Psoas muscle (tissue), 8 donors: ENCODE measurements at regions of chr15 and their contacts with region 1.

Region 1: DNA sequence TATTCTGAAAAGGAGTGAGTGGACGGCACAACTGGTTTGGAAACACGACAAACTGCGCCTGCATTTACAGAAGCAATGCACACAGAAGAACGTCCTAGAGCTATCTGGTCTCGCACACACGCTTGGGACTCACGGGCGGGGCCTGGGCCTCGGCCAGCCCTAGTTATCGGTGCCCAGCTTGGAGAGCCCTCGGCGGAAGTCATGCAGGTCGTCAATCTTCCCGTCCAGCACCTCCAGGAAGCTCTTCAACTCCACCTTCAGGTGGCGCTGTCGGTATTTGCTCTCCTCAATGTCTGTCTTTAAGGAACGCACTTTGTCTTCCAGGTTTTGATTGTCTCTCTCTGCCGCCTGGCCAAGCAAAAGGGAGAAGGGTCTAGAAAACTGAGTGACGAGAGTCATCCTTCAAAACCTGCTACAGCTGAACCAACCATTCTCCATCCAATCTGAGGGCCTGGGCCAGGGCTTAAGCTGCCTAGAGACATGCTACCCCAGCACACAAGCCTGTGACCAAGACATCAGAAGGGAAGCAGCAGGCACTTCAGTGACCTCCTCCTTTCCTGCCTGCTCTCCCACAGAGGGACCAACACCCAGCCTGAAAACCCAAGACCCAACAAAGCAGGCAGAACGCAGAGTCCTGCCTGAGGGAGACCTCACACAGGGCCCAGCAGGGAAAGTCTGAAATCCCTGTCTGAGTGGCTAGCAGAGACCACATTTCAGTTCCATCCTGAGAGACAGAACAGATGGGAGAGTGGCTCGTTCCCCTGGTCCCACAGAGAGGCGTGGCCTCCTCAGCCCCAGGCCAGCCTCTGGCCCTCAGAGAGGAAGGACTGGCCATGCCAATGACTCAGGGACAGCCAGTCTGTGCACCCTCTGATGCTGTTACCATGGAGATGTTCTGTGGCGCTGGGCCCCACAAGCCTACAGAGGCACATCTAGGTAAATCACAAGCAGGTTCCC is 40.4 kb downstream of the WHAMM start:
- DNase-seq: peak; percentile 81 to 93
- ATAC-seq: peak; percentile 88 to 96 (median 93)
- H3K4me3 ChIP-seq: peak overlapping the region; percentile 12
- H3K27ac ChIP-seq: peak overlapping the region; percentile 68
- H3K4me1 ChIP-seq: peaks cover 6% of the 10 kb centered on the region
- H3K27me3 ChIP-seq: no peaks in the 10 kb centered on the region
- CTCF ChIP-seq: peak; percentile 77

Region 2: DNA sequence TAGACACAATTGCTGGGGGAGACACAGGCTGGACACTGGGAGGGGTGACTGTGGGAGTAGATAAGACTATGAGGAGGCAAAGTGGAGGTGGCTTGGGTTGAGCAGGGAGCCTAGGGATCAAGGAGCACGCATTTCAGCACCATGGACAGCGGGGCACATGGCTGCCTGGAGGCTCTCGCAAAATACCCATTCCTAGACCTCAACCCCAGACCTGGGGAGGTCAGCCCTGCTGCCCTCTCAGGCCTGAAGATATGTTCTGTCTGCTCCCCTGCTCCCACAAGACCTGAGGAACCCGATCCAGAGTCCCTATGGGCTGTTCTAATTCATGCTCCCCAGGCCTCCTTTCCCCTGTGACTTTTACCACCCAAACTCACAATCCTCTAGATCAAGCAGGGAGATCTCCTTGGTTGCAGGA is 186.6 kb before region 1 on chr15:
- intact Hi-C with region 1: no loop called
- DNase-seq: peak; percentile 29 to 62
- ATAC-seq: no peak
- H3K4me3 ChIP-seq: no peak overlapping the region
- H3K27ac ChIP-seq: no peak overlapping the region
- H3K4me1 ChIP-seq: no peaks in the 10 kb centered on the region
- H3K27me3 ChIP-seq: peaks cover 0 to 12% (median 0%) of the 10 kb centered on the region in 3 donors
- CTCF ChIP-seq: no peak

Region 3: DNA sequence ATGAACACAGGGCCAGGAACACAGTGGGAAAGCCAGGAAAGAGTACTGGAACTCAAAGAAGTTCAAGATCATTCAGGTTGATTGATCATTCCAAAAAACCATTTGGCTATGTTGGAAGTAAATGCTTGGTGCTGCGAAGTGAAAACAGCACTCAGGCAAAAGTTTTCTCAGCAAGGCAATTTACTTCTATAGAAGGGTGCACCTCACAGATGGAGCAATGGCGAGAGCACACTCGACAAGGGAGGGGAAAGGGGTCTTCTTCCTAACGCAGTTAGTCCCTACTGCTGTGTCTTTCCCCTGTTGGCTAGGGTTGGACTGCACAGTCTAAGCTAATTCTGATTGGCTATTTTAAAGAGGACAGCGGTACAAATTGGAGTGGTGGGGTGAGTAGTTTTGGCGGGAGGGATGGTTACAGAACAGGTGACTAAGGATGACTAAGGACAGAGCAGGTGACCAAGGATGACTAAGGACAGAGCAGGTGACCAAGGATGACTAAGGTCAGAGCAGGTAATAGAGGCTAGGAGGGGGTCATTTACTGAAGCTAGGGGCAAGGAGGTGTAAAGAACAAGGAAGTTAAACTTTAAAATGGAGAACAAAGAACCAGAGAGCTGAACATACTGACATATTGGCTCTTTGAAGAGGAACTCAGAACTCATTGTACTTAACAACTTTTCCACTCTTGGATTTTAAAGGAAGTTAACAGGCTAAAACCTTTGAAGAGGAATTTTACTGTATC is 59.4 kb after region 1 on chr15:
- intact Hi-C with region 1: no loop called
- DNase-seq: no peak
- ATAC-seq: no peak
- H3K4me3 ChIP-seq: no peak overlapping the region
- H3K27ac ChIP-seq: no peak overlapping the region
- H3K4me1 ChIP-seq: peaks cover 17% of the 10 kb centered on the region
- H3K27me3 ChIP-seq: no peaks in the 10 kb centered on the region
- CTCF ChIP-seq: no peak

Region 4: DNA sequence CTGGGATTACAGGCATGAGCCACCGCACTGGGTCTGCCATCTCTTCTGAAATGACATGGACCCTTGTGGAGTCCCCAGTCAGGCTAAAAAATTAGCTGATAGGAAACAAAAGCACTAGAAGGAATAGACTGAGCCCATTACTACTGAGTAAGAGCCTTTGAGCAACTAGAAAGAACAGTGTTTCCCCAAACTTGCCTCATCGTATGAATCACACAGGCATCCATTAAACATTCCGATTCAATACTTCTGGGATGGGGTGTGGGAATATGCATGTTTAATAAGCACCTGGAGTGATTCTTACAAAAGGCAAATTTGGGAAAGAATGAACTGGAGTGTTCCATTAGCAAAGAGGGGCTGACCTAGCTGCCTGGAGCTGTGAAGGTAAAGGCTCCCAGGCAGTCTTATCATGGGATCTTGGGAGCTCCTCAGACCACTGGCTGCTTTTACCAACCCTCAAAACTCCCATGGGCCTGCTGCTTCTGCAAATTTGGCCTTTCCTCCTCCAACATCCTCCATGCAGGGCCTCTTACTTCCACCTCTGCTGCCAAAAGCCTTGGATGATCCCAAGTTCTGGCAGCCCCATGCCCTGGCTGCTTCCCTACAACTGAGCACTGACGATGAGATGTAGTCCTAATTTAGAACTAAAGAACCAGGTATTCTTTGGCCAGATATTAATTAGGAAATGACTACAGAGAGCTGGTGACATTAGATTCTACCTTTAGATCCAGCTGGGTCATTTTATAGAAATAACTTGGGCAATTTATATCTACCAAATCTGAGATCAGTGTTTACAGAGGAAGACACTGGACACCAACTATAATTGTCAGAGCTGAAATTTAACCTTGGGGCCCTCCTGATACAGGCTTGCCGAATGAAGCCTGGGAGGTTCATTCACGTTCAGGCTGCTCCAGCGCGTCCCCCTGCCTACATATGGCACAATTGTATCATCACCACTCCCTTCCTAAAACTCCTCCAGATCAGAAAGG is 113.8 kb after region 1 on chr15:
- intact Hi-C with region 1: no loop called
- DNase-seq: peak; percentile 41 to 82
- ATAC-seq: peak; percentile 92 to 94 (median 92)
- H3K4me3 ChIP-seq: no peak overlapping the region
- H3K27ac ChIP-seq: peak overlapping the region; percentile 76
- H3K4me1 ChIP-seq: peaks cover 22% of the 10 kb centered on the region
- H3K27me3 ChIP-seq: no peaks in the 10 kb centered on the region
- CTCF ChIP-seq: no peak

Region 5: DNA sequence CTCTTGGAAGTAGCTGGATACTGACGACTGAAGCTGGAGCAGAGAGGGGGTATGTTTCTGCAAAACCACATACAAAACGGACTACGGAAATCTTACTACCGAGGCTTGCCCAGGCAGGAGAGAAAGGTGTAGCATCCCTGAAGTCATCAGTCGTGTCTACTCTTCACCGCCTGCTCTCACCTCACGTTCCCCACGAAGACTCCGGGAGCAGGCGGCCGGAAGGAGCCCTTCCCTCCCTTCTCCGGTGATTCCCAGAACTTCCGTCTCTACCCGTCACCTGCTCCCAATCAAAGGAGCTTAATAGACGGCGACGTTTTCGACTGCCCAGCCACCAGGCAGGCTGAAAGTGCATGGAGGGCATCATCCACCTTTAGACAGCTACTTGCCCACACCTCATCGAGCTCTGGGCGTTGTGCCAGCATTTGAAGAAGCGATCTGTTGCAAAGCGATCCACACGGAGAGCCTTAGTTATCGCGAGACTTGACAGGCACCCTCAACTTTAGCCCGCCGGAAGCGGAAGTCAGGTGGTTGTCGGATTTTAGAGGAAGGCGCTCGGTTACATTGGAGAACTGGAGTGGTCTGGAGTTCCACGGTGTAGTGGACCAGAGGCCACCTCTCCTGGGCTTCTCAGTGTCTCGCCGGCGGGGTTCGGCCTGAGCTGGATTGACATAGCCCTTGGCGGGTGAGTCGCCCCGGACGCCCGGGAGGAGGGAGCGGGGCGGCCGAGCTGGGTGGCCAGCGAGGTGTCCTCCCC is 136.0 kb after region 1 on chr15 and contains the start of gene RAMAC:
- intact Hi-C with region 1: loop called in 1 of 2 experiments (anchors 5 kb)
- DNase-seq: peak; percentile 91 to 96
- ATAC-seq: peak; percentile 96 to 99 (median 98)
- H3K4me3 ChIP-seq: peak within 1 kb of the TSS; percentile 71
- H3K27ac ChIP-seq: peak within 1 kb of the TSS; percentile 89
- H3K4me1 ChIP-seq: peaks cover 19% of the 10 kb centered on the region
- H3K27me3 ChIP-seq: no peaks in the 10 kb centered on the region
- CTCF ChIP-seq: no peak
- total RNA-seq, gene RAMAC: 17.0 to 21.8 (median 19.9) TPM

Region 6: GRCh38 chr15:82999905-83000671 is 150.3 kb after region 1 on chr15:
- intact Hi-C with region 1: loop called (anchors 1 to 5 kb)
- DNase-seq: no peak
- ATAC-seq: peak; percentile 87 to 93 (median 89)
- H3K4me3 ChIP-seq: peak overlapping the region; percentile 55
- H3K27ac ChIP-seq: peak overlapping the region; percentile 59
- H3K4me1 ChIP-seq: peaks cover 4% of the 10 kb centered on the region
- H3K27me3 ChIP-seq: no peaks in the 10 kb centered on the region
- CTCF ChIP-seq: peak; percentile 57